Transverse colon (tissue), 4 donors: ENCODE measurements at regions of chr15 and their contacts with region 1.

Region 1: GRCh38 chr15:32774022-32774421 is 56.2 kb downstream of the GREM1 start:
- DNase-seq: no peak
- H3K4me3 ChIP-seq: no peak overlapping the region
- H3K27ac ChIP-seq: no peak overlapping the region
- H3K4me1 ChIP-seq: no peaks in the 10 kb centered on the region
- H3K27me3 ChIP-seq: no peaks in the 10 kb centered on the region
- CTCF ChIP-seq: no peak
- EP300 ChIP-seq: no peak
- POLR2A ChIP-seq: no peak

Region 2: GRCh38 chr15:32743411-32744140 is 30.4 kb before region 1 on chr15:
- in situ Hi-C with region 1: no loop called
- intact Hi-C with region 1: loop called (anchors 1 kb)
- DNase-seq: no peak
- H3K4me3 ChIP-seq: no peak overlapping the region
- H3K27ac ChIP-seq: no peak overlapping the region
- H3K4me1 ChIP-seq: no peaks in the 10 kb centered on the region
- H3K27me3 ChIP-seq: no peaks in the 10 kb centered on the region
- CTCF ChIP-seq: no peak
- EP300 ChIP-seq: no peak
- POLR2A ChIP-seq: no peak

Region 3: DNA sequence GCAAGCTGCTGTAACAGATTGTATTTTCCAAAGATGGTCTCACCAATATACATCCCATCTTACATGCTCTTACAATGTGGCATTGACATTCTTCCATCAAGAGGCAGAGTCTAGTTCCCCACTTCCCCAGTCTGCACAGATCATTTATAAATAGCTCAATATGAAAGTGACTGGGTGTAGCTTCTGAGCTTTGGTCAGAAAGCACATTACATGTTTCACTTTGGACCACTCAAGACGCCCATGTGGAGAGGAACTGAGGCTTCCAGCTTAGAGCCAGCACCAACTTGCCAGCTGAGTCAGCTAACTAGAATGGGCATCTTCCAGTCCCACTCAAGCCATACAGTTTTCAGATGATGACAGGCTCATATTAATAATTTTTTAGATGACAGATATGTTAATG is 10.7 kb before region 1 on chr15:
- in situ Hi-C with region 1: no loop called
- intact Hi-C with region 1: loop called (anchors 1 kb)
- DNase-seq: no peak
- H3K4me3 ChIP-seq: no peak overlapping the region
- H3K27ac ChIP-seq: no peak overlapping the region
- H3K4me1 ChIP-seq: no peaks in the 10 kb centered on the region
- H3K27me3 ChIP-seq: no peaks in the 10 kb centered on the region
- CTCF ChIP-seq: no peak
- EP300 ChIP-seq: no peak
- POLR2A ChIP-seq: no peak